ENCODE measurements at regions of chr2 and their contacts with region 1.

Region 1: GRCh38 chr2:231604685-231605606 is 12.3 kb downstream of the TEX44 start:
- DNase-seq: peak; percentile 93 to 98
- ATAC-seq: peak; percentile 86 to 87
- H3K4me3 ChIP-seq: peak overlapping the region; percentile 47
- H3K27ac ChIP-seq: peak overlapping the region; percentile 96 to 97
- H3K4me1 ChIP-seq: peaks cover 34% of the 10 kb centered on the region
- CTCF ChIP-seq: no peak; the same call in 2 of the 3 replicates
- EP300 ChIP-seq: no peak
- POLR2A ChIP-seq: no peak; the same call in 1 of the 2 replicates
- RAD21 ChIP-seq: no peak

Region 2: GRCh38 chr2:231530091-231531011 is 74.6 kb before region 1 on chr2 and contains the start of gene NMUR1:
- CTCF ChIA-PET with region 1: interaction called, 10 read pairs
- POLR2A ChIA-PET with region 1: interaction called, 3 read pairs
- DNase-seq: peak; percentile 48 to 52
- ATAC-seq: peak; percentile 62 to 90
- H3K4me3 ChIP-seq: peak within 1 kb of the TSS; percentile 44
- H3K27ac ChIP-seq: peak within 1 kb of the TSS; percentile 30 to 82; a peak in 4 of 6 replicates
- H3K4me1 ChIP-seq: peaks cover 4% of the 10 kb centered on the region; the same call in 1 of the 3 replicates
- CTCF ChIP-seq: peak; percentile 90
- EP300 ChIP-seq: no peak
- POLR2A ChIP-seq: no peak
- RAD21 ChIP-seq: peak; percentile 20 to 57; a peak in 4 of 5 replicates
- polyA plus RNA-seq, gene NMUR1: 0.05 TPM in 1 of 2 replicates, not detected in the other

Region 3: DNA sequence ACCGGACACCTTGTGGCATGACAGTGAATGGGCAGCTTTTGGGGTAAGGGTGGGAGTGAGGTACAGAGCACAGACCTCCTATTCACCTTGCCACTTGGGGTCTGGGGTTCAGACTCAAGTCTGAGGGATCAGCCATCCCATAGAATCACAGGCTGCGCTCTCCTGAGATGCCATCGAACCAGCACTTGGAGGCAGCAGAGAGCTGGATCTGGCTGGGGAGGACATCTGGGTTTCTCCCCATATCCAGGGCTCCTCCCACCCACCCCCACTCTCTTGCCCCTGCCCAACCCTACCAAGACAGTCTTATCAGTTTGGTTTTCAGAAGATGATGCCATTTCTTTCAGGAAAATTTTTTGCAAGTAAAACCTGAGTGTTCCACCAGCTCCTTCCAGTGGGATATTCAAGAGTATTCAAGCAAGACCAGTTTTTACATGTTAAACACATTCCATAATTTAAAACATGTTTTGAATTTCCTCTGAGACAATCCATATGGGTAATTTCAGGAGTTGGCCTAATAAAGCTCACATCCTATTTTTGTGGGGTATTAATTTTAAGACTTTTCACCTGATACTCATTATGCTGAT is 41.5 kb before region 1 on chr2:
- CTCF ChIA-PET with region 1: interaction called, 208 read pairs
- POLR2A ChIA-PET with region 1: interaction called, 5 read pairs
- DNase-seq: peak; percentile 64 to 75
- ATAC-seq: peak; percentile 96 to 98
- H3K4me3 ChIP-seq: no peak overlapping the region
- H3K27ac ChIP-seq: no peak overlapping the region
- H3K4me1 ChIP-seq: no peaks in the 10 kb centered on the region
- CTCF ChIP-seq: peak; percentile 75
- EP300 ChIP-seq: no peak
- POLR2A ChIP-seq: no peak
- RAD21 ChIP-seq: peak; percentile 74 to 77

Region 4: GRCh38 chr2:231590619-231591018 is 14.3 kb before region 1 on chr2:
- CTCF ChIA-PET with region 1: interaction called, 19 read pairs
- POLR2A ChIA-PET with region 1: interaction called, 5 read pairs
- DNase-seq: no peak
- ATAC-seq: 0 out of 6 replicates have a peak, but pooled peaks of 1 of the 2 experiments have one; percentile 36
- H3K4me3 ChIP-seq: no peak overlapping the region
- H3K27ac ChIP-seq: no peak overlapping the region
- H3K4me1 ChIP-seq: no peaks in the 10 kb centered on the region
- CTCF ChIP-seq: no peak
- EP300 ChIP-seq: no peak
- POLR2A ChIP-seq: no peak
- RAD21 ChIP-seq: no peak

Region 5: DNA sequence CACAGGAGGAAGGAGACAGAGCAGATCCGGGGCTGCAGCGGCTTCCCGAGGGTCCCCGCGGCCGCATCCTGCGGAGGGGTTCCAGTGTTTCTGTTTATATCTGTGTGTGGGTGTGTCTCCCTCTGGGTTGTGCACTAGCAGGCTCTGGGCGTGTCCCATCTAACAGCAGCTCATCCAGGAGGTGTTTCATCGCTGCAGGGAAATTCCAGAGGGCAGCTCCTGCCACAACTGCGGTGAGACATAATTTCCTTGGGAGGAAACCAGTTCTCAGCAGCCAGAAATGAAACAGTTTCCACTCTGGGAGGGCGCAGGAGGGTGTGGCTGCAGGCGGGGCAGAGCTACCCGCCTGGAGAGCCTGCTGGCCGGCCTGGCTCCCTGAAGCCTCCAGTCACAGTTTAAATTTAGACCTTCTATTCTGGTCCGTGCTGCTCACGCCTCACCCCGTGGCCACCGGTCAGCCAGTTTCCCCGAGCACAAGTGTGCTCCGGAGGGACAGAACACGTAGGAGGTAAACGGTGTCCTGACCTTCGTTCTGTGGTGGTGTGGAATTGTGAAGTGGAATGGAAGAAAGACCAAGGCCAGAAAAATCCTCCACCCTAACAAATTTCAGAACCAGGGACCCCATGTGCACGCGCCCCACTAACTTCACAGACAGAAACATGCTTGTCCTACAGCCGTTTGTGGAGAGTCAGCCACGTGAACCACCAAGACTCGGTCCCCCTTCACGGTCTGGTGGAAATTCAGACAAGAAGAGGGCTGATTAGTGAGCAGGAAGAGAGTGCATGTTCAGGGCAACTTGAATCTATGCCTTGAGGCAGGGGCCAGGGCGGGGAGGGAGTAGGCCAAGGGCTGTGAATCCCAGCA is 37.9 kb after region 1 on chr2:
- CTCF ChIA-PET with region 1: interaction called, 4,158 read pairs
- POLR2A ChIA-PET with region 1: interaction called, 13 read pairs
- DNase-seq: peak; percentile 95 to 97
- ATAC-seq: peak; percentile 93
- H3K4me3 ChIP-seq: peak overlapping the region; percentile 16; the same call in 2 of the 3 replicates
- H3K27ac ChIP-seq: peak overlapping the region; percentile 93 to 96
- H3K4me1 ChIP-seq: peaks cover 49% of the 10 kb centered on the region
- CTCF ChIP-seq: no peak
- EP300 ChIP-seq: no peak; a peak in 1 of 5 replicates
- POLR2A ChIP-seq: peak; percentile 29; the same call in 1 of the 2 replicates
- RAD21 ChIP-seq: no peak

Region 6: DNA sequence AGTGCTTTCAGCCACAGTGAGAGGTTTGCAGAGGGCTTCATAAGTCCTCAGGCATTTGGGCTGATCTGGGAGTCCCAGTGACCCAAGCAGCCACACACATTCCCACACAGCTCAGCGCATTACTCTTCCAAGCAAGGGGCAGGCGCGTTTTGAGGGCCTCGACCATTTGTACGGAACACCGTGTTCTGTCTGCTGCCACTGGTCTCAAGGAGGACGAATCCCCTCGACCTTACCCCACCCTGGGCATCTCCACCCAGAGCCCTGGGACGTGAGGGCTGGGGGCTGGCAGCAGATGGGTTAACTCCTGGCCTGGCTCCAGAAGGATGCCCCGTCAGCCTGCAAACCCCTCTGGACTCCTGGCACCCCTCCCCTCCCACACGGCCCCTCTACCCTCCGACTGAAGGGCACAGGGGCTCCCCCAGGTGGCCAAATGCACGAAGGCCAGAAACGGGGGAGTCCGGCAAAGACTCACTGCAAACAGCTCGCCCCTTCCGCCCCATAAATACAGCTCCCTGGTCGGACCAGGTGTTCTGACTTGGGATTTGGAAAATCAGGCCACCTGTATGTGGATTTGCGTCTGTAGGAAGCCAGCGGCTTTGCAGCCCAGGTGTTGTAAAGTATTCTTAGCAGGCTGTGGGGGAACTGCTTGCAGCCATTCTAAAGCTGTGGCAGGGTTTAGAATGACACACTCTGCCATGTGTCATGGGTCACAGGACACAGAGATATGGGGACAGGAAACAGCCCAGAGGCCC is 69.8 kb after region 1 on chr2:
- CTCF ChIA-PET with region 1: interaction called, 4,158 read pairs
- POLR2A ChIA-PET with region 1: interaction called, 14 read pairs
- DNase-seq: peak in 1 of 2 experiments; percentile 70
- ATAC-seq: peak; percentile 42 to 60
- H3K4me3 ChIP-seq: no peak overlapping the region
- H3K27ac ChIP-seq: peak overlapping the region; percentile 97
- H3K4me1 ChIP-seq: peaks cover 43% of the 10 kb centered on the region
- CTCF ChIP-seq: peak; percentile 81
- EP300 ChIP-seq: no peak
- POLR2A ChIP-seq: no peak
- RAD21 ChIP-seq: peak; percentile 75 to 79

Region 7: GRCh38 chr2:232030229-232030628 is 425.3 kb after region 1 on chr2:
- CTCF ChIA-PET with region 1: no interaction called
- POLR2A ChIA-PET with region 1: no interaction called
- DNase-seq: peak in 1 of 2 experiments; percentile 29
- ATAC-seq: peak; percentile 73
- H3K4me3 ChIP-seq: no peak overlapping the region
- H3K27ac ChIP-seq: no peak overlapping the region
- H3K4me1 ChIP-seq: no peaks in the 10 kb centered on the region
- CTCF ChIP-seq: no peak
- EP300 ChIP-seq: no peak
- POLR2A ChIP-seq: no peak
- RAD21 ChIP-seq: peak in 1 of 2 experiments; percentile 18; a peak in 1 of 5 replicates